A549 (cell line): ENCODE measurements at regions of chr12 and their contacts with region 1.

Region 1: GRCh38 chr12:122793685-122794106 is 19.3 kb downstream of the CCDC62 start:
- DNase-seq: peak; percentile 63 to 73
- ATAC-seq: peak; percentile 89 to 90
- H3K4me3 ChIP-seq: no peak overlapping the region
- H3K27ac ChIP-seq: no peak overlapping the region
- H3K4me1 ChIP-seq: no peaks in the 10 kb centered on the region
- CTCF ChIP-seq: peak; percentile 86
- EP300 ChIP-seq: no peak
- POLR2A ChIP-seq: no peak
- RAD21 ChIP-seq: peak; percentile 80 to 86

Region 2: GRCh38 chr12:122803937-122804336 is 10.2 kb after region 1 on chr12:
- CTCF ChIA-PET with region 1: interaction called, 23 read pairs
- POLR2A ChIA-PET with region 1: no interaction called
- DNase-seq: no peak
- ATAC-seq: no peak
- H3K4me3 ChIP-seq: no peak overlapping the region
- H3K27ac ChIP-seq: no peak overlapping the region
- H3K4me1 ChIP-seq: no peaks in the 10 kb centered on the region
- CTCF ChIP-seq: no peak
- EP300 ChIP-seq: no peak
- POLR2A ChIP-seq: no peak
- RAD21 ChIP-seq: no peak

Region 3: DNA sequence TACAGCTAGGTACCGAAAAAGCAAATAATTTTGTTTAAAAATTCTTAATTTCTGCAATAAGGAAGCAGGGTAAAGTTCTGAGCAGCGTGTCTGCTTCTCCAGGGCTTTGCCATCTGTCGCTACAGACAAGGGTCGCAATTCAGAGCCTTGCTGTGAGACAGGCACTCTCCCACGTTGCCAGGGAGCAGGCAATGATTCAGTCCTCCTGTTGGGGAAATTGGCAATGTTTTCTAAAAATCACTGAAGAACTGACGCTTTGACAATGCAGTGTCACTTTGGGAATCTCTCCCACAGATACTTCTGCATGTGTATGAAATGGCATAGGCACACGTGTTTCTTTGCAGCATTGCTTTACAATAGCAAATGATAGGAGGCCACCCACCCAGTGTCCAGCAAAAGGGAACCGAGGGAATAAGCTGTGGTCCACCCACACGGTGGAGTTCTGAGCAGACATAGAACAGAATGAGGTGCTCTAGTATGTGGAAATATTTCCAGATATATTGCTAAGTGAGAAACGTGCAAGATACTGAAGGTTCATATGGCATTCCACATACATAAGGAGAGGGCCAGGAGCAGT is 25.6 kb after region 1 on chr12:
- CTCF ChIA-PET with region 1: interaction called, 33 read pairs
- POLR2A ChIA-PET with region 1: no interaction called
- DNase-seq: no peak
- ATAC-seq: no peak; a peak in 1 of 6 replicates
- H3K4me3 ChIP-seq: no peak overlapping the region
- H3K27ac ChIP-seq: no peak overlapping the region
- H3K4me1 ChIP-seq: peaks cover 6% of the 10 kb centered on the region; the same call in 1 of the 3 replicates
- CTCF ChIP-seq: no peak
- EP300 ChIP-seq: no peak
- POLR2A ChIP-seq: no peak
- RAD21 ChIP-seq: no peak

Region 4: GRCh38 chr12:122841544-122842321 is 48.0 kb after region 1 on chr12:
- CTCF ChIA-PET with region 1: interaction called, 22 read pairs
- POLR2A ChIA-PET with region 1: no interaction called
- DNase-seq: peak in 1 of 2 experiments; percentile 50
- ATAC-seq: peak; percentile 31 to 44; a peak in 3 of 6 replicates
- H3K4me3 ChIP-seq: no peak overlapping the region
- H3K27ac ChIP-seq: peak overlapping the region in 1 of 2 experiments; percentile 60; a peak in 4 of 6 replicates
- H3K4me1 ChIP-seq: peaks cover 35% of the 10 kb centered on the region
- CTCF ChIP-seq: no peak
- EP300 ChIP-seq: no peak
- POLR2A ChIP-seq: no peak
- RAD21 ChIP-seq: no peak

Region 5: GRCh38 chr12:122951979-122952892 is 158.5 kb after region 1 on chr12:
- CTCF ChIA-PET with region 1: interaction called, 37 read pairs
- POLR2A ChIA-PET with region 1: interaction called, 10 read pairs
- DNase-seq: peak; percentile 79 to 87
- ATAC-seq: peak; percentile 95 to 98
- H3K4me3 ChIP-seq: no peak overlapping the region
- H3K27ac ChIP-seq: peak overlapping the region; percentile 57 to 72; a peak in 5 of 6 replicates
- H3K4me1 ChIP-seq: peaks cover 25% of the 10 kb centered on the region
- CTCF ChIP-seq: peak; percentile 93
- EP300 ChIP-seq: no peak
- POLR2A ChIP-seq: no peak
- RAD21 ChIP-seq: peak; percentile 97 to 99